AG04449 (cell line): ENCODE measurements at regions of chr7 and their contacts with region 1.

Region 1: DNA sequence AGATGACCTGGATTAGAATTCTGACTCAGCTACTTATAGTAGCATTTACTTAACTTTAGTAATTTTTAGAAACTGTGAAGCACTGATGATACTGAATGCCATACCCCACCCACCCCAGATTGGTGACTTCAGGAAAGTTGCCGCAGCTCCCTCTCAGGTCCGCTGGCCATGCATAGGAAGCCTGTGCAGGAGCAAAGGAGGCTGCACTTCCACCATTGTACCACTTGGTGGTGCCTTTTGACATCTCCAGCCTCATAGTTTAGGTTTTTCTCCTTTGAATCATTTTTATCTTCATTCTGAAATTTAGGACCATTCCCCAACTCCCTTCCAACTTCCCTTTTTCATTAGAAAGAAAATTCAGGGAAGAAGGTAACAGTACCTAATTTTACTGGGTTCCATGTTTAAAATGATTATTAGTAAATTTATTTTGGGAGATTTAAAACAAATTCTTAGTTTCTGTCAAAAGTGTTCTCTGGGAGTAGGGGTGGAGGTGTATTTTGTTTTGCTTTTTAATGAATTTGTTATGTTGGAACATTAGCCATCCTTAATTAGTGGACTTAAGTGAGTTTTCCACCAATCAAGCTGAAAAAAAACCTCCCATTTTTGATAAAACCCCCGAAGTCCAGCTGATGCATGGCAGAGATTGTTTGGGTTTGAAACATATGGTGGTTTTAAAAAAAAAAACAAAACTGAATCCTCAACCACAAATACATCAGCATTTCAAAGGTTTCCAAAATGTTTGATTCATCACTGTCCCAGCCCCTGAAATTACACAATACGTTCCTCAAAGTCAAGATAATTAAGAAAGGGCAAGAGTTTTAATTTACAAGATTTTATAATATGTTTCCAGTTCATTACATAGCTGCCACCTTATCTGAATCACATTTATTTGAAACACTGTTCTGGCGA is 109.6 kb downstream of the WNT2 start:
- DNase-seq: no peak
- H3K4me3 ChIP-seq: no peak overlapping the region
- CTCF ChIP-seq: peak; percentile 90

Region 2: GRCh38 chr7:117202511-117202910 is 10.7 kb before region 1 on chr7:
- CTCF ChIA-PET with region 1: interaction called, 47 read pairs
- POLR2A ChIA-PET with region 1: no interaction called
- DNase-seq: no peak
- H3K4me3 ChIP-seq: no peak overlapping the region
- CTCF ChIP-seq: no peak

Region 3: DNA sequence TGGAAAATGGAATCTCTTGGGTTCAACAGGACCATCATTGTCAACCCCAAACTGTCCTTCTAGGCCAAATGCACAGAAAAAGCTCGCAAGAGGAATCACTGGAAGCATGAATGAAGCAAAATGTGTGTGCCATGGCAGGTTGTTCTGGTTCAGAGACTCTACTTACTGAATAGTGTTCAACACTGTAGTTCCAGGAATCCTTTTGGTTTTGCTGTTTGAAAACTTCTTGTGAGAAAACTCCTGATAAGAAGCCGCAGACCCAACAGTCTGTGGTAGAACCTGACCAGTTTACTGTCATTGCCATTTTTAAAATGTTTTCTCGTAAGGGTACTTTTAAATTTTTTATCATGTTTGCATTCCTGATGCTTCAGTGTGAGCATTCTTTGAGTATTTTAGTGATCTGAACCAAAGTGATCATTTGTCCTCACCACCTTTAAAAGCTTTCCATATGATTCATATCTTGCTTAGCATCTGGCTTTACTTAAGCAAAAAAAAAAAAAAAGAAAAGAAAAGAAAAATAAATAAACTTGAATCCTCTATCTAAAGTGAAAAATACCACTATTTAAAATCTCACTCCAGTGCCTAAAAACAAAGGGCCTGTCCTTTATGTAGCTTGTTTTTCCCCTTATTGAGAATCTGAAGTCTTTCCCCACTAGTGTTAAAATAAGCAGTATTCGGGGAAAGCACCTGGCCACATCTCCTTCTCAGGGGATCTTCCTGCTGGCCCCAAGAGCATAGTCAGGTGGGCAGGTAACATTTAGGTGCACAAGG is 17.2 kb after region 1 on chr7:
- CTCF ChIA-PET with region 1: interaction called, 19 read pairs
- POLR2A ChIA-PET with region 1: no interaction called
- DNase-seq: peak; percentile 95
- H3K4me3 ChIP-seq: no peak overlapping the region
- CTCF ChIP-seq: no peak

Region 4: GRCh38 chr7:117338020-117338419 is 124.8 kb after region 1 on chr7:
- CTCF ChIA-PET with region 1: interaction called, 18 read pairs
- POLR2A ChIA-PET with region 1: no interaction called
- DNase-seq: no peak
- H3K4me3 ChIP-seq: no peak overlapping the region
- CTCF ChIP-seq: no peak

Region 5: DNA sequence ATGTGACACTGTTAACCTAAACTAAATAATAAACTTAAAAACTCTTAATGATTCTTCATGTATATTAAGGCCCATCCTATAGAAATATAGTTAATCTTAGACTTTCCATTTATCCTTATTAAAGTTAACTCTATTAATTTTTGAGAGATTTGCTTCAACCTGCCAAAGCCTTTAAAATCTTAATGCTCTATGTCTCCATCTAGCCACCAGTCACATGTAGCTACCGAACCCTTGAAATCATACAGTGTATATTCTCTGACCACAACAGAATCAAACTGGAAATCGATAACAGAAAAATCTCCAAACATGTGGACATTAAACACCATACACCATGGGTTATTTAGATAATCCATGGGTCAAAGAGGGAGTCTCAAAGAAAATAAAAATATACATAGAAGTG is 162.2 kb after region 1 on chr7:
- CTCF ChIA-PET with region 1: interaction called, 36 read pairs
- POLR2A ChIA-PET with region 1: no interaction called
- DNase-seq: no peak
- H3K4me3 ChIP-seq: no peak overlapping the region
- CTCF ChIP-seq: no peak

Region 6: GRCh38 chr7:117385340-117386109 is 172.3 kb after region 1 on chr7:
- CTCF ChIA-PET with region 1: interaction called, 44 read pairs
- POLR2A ChIA-PET with region 1: no interaction called
- DNase-seq: no peak
- H3K4me3 ChIP-seq: no peak overlapping the region
- CTCF ChIP-seq: peak; percentile 11